ENCODE measurements at regions of chr16 and their contacts with region 1.

Region 1: GRCh38 chr16:30407102-30407803 is at the start of gene ZNF771:
- DNase-seq: peak; percentile 96
- H3K4me3 ChIP-seq: peak within 1 kb of the TSS; percentile 57 to 88 (median 65)
- H3K27ac ChIP-seq: peak within 1 kb of the TSS; percentile 81 to 97 (median 90)
- H3K4me1 ChIP-seq: peaks cover 0 to 29% (median 26%) of the 10 kb centered on the region in 4 donors
- H3K27me3 ChIP-seq: no peaks in the 10 kb centered on the region
- CTCF ChIP-seq: no peak
- EP300 ChIP-seq: no peak
- POLR2A ChIP-seq: peak; percentile 40 to 63
- total RNA-seq, gene ZNF771: 17.4 to 30.7 (median 20.3) TPM

Region 2: DNA sequence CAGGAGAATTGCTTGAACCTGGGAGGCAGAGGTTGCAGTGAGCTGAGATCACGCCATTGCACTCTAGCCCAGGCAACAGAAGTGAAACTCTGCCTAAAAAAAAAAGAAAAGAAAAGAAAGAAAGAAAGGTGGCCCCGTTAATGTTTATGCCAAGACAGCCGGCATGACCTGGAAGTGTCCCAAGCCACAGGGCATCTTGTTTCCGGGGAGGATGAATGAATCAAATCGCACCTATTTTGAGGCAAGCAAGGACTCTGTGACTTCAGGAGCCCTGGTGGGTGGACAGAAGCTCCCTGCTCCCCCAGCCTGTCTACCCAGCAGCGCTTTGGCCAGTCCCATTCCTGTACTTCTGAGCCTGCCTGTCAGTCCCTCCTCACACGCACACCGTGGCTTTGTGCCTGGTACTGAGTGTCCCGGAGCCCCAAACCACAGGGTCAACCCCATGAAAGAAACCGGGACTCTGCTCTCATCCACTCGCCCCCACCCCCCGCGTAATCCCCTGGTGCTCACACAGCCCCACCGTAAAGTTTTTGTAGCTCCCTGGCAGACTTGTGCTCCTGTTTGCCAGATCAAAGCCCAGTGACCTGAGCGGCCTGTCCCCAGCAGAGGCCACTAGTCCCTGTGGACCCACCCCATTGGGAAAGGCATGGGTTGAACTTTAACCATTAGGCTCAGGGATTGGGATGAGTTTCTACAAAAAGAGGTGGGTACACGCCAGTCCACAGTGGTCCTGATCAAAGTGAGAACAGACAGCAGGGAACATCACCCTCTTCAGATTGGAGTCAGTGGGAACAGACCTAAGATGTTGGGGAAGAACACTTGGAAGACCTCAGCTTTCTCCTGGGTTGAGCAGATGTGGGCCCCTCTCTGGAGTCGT is 71.4 kb before region 1 on chr16:
- intact Hi-C with region 1: loop called (anchors 5 kb)
- DNase-seq: peak; percentile 70
- H3K4me3 ChIP-seq: peak overlapping the region; percentile 69 to 98 (median 72)
- H3K27ac ChIP-seq: peak overlapping the region; percentile 94 to 99 (median 96)
- H3K4me1 ChIP-seq: peaks cover 0 to 7% (median 6%) of the 10 kb centered on the region in 4 donors
- H3K27me3 ChIP-seq: no peaks in the 10 kb centered on the region
- CTCF ChIP-seq: no peak
- EP300 ChIP-seq: no peak
- POLR2A ChIP-seq: no peak

Region 3: DNA sequence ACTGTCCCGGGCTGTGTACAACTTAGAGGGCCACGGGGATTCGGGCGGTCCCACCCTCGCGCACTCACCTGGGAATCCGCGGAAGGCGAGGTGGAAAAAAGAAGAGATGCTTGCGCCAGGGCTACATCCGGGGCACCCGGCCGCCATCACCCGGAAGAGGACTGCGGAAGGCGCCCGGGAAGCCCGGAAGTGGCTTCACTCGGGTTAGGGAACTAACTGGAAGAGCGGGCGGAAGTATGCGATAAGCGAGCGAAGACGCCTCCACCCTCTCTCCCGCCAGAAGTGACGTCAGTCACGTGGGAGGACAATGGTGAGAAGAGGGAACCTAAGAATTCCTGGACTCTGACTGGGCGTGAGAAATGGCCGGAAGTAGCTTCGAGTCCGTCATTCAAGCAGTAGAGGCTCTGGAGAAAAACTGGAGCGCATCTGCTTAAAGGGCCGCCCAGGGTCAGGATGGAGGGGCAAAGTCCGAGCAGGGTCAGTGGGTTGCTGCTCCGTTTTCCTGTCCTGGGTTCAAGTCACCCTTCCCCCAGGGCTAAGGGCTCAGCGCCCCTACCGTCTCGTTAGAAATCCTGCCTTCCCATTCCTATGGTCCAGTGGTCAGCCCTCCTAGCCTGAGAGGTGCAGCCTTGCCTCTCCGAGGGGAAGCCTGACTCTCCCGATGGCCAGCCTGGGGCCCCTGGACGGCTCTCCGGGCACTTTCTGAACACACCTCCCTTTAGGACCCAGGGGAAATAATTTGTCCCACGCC is 51.9 kb before region 1 on chr16 and contains the start of gene CD2BP2:
- intact Hi-C with region 1: loop called (anchors 2 kb)
- DNase-seq: peak; percentile 99
- H3K4me3 ChIP-seq: peak within 1 kb of the TSS; percentile 59 to 96 (median 81)
- H3K27ac ChIP-seq: peak within 1 kb of the TSS; percentile 93 to 99 (median 96)
- H3K4me1 ChIP-seq: peaks cover 0 to 58% (median 50%) of the 10 kb centered on the region in 4 donors
- H3K27me3 ChIP-seq: no peaks in the 10 kb centered on the region
- CTCF ChIP-seq: no peak
- EP300 ChIP-seq: peak in 2 of 4 donors; percentile 23 to 30
- POLR2A ChIP-seq: peak in 1 of 2 donors; percentile 27
- total RNA-seq, gene CD2BP2: 29.9 to 57.3 (median 43.0) TPM

Region 4: DNA sequence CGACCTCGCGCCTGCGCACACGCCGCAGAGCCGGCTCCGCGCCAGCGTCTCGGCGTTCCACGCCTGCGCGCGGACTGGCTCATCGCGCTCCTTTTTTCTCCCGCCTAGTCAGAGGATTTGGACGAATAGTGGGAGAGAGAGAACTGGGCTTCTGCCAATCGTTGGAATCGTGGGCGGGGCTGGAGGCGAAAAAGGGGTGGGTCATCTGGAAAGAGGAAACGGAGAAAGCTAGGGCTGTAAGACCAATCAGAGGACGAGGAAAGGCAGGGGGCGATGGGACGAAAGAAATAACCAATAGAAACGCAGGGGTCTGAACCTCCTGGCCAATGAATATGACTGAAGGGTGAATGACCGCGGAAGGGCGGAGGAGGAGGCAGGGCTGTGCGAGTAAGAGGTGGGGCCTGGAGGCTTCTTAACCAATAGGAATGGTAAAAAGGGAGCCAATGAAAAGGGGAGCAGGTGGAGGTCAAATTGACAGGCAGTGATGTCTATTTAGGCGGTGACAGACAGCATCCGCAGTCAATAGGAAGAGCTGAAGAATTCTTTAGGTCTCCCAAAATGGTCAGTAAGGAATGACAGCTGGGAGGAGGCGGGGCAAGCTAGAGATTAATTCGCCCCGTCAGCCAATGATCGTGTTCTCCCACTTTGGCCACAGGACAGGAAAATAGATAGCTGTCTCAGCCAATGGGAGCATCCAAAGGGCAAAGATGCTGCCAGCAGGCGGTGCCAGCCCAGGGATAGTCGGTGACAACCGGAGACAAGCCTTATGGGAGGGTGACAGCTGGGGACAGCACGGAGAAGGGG is 36.6 kb before region 1 on chr16 and contains the start of gene TBC1D10B:
- intact Hi-C with region 1: loop called (anchors 5 kb)
- DNase-seq: peak; percentile 100
- H3K4me3 ChIP-seq: peak within 1 kb of the TSS; percentile 62 to 99 (median 96)
- H3K27ac ChIP-seq: peak within 1 kb of the TSS; percentile 85 to 94 (median 90)
- H3K4me1 ChIP-seq: peaks cover 0 to 49% (median 42%) of the 10 kb centered on the region in 4 donors
- H3K27me3 ChIP-seq: no peaks in the 10 kb centered on the region
- CTCF ChIP-seq: no peak
- EP300 ChIP-seq: no peak
- POLR2A ChIP-seq: peak in 1 of 2 donors; percentile 20
- total RNA-seq, gene TBC1D10B: 14.5 to 25.2 (median 19.2) TPM

Measured in sigmoid colon (tissue), 7 donors.